ENCODE measurements at regions of chr21 and their contacts with region 1.

Region 1: DNA sequence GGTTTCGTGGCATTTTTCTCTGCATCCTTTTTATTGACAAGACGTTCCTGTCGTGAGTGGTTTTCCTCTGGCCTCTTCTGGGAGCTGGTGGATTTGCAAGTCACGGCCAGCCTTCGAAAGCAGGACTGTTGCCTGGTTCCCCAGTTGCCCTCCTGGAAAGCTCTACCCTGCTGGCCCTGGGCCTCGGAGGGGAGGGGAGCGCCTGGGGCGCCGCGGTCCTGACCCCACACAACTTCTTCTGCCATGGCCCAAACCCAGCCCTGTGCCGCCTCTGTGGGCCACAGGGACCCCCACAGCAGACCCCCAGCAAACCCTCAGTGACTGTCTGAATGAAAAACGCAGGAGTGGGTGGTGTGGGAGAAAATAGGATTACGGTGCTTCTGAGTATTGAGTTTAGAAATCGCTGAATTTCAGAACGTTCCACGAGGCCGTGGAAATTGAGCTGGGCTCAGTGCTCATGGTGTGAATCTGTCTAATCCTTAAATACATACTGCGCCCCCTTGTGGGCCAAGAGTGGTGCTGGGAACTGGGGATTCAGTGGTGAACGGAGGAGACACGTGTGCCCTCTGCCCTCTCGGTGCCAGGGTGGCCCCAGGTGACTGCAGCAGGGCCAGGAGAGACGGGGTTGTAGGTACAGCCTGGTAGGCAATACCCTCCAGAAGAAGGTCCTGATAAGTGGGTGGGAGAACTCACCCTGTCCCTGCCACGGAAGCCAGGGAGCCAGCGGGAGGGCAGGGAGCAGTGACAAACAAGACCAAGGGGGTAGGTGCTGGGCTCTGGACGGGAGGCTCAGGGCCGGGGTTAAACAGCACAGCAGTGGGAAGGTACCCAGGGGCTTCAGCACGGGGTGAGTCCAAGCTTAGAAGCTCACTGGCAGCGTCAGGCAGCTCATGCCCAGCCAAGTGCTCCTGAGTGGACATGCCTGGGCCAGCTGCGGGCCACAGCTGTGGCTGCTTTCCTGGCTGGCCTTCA is 101.2 kb upstream of the COL6A1 start:
- DNase-seq: peak; percentile 93
- H3K4me3 Mint-ChIP-seq: no peak overlapping the region
- H3K27ac Mint-ChIP-seq: peak overlapping the region; percentile 50
- H3K4me1 Mint-ChIP-seq: peaks cover 35% of the 10 kb centered on the region
- H3K27me3 Mint-ChIP-seq: no peaks in the 10 kb centered on the region

Region 2: GRCh38 chr21:45478115-45478801 is 402.1 kb before region 1 on chr21:
- CTCF ChIA-PET with region 1: no interaction called
- intact Hi-C with region 1: loop called (anchors 1 kb)
- DNase-seq: peak; percentile 90
- H3K4me3 Mint-ChIP-seq: peak overlapping the region; percentile 71
- H3K27ac Mint-ChIP-seq: peak overlapping the region; percentile 94
- H3K4me1 Mint-ChIP-seq: peaks cover 30% of the 10 kb centered on the region
- H3K27me3 Mint-ChIP-seq: no peaks in the 10 kb centered on the region

Region 3: GRCh38 chr21:45596704-45597318 is 283.6 kb before region 1 on chr21:
- CTCF ChIA-PET with region 1: no interaction called
- intact Hi-C with region 1: loop called (anchors 10 kb)
- DNase-seq: peak; percentile 92
- H3K4me3 Mint-ChIP-seq: no peak overlapping the region
- H3K27ac Mint-ChIP-seq: no peak overlapping the region
- H3K4me1 Mint-ChIP-seq: peaks cover 28% of the 10 kb centered on the region
- H3K27me3 Mint-ChIP-seq: no peaks in the 10 kb centered on the region

Region 4: DNA sequence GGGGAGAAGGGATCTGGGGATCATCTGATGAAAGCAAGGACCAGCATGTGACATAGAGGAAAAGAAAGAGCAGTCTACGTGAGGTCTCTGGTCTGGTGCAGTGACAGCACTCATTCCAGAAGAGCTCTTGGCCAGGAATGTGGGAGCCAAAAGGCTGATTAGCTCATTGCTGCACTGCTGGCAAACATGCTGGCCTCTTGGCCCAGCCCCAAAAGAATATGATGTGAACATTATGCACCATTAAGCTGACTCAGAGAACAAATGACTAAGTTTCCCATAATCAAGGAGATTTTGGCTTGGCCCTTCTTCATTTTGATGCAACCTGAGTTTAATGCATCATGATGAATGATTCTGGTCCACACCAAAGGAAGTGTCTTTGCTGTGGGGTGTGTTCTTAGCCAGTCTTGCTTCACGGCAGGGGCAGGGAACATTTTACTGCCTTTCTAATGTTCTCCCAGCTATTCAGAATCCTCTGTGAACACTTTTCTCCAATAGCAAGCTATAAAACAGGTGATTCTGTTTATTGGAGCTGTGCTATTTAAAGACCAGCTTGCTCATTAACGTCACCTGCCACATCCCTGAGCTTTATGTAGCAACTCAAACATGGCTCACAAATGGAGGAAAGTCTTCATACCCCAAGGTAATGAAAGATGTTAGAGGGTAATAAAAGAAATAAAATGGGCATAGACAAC is 181.7 kb before region 1 on chr21:
- CTCF ChIA-PET with region 1: no interaction called
- intact Hi-C with region 1: loop called (anchors 5 kb)
- DNase-seq: peak; percentile 56
- H3K4me3 Mint-ChIP-seq: no peak overlapping the region
- H3K27ac Mint-ChIP-seq: peak overlapping the region; percentile 79
- H3K4me1 Mint-ChIP-seq: peaks cover 38% of the 10 kb centered on the region
- H3K27me3 Mint-ChIP-seq: no peaks in the 10 kb centered on the region

Region 5: GRCh38 chr21:45912611-45913417 is 32.4 kb after region 1 on chr21:
- CTCF ChIA-PET with region 1: no interaction called
- intact Hi-C with region 1: no loop called
- DNase-seq: no peak
- H3K4me3 Mint-ChIP-seq: no peak overlapping the region
- H3K27ac Mint-ChIP-seq: no peak overlapping the region
- H3K4me1 Mint-ChIP-seq: peaks cover 8% of the 10 kb centered on the region
- H3K27me3 Mint-ChIP-seq: no peaks in the 10 kb centered on the region

Region 6: DNA sequence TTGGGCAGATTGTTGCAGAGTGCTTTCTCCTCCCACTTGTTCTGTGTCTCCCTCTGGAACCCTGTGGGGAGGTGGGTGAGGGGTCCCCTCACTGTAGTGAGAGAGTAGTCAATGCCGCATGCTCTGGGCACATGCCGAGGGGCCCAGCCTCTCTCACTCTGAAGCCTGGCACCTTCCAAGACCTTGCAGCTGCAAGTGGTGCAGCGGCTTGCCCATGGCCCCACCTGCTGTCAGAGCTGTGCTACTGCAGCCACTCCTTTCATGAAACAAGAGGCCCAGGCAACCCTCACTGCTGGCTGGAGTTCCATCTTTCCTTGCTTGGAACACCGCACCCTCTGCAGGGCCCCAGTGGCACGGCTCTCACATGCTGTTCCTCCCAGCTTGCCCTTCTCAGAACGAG is 42.8 kb after region 1 on chr21:
- CTCF ChIA-PET with region 1: interaction called, 8 read pairs
- intact Hi-C with region 1: loop called (anchors 1 kb)
- DNase-seq: peak; percentile 79
- H3K4me3 Mint-ChIP-seq: no peak overlapping the region
- H3K27ac Mint-ChIP-seq: no peak overlapping the region
- H3K4me1 Mint-ChIP-seq: peaks cover 22% of the 10 kb centered on the region
- H3K27me3 Mint-ChIP-seq: no peaks in the 10 kb centered on the region